Prostate gland (tissue), 2 donors: ENCODE measurements at regions of chr11 and their contacts with region 1.

Region 1: GRCh38 chr11:114610984-114611944 is 15.7 kb upstream of the NXPE4 start:
- DNase-seq: peak; percentile 2
- H3K4me3 ChIP-seq: no peak overlapping the region
- H3K27ac ChIP-seq: no peak overlapping the region
- H3K4me1 ChIP-seq: no peaks in the 10 kb centered on the region
- H3K27me3 ChIP-seq: no peaks in the 10 kb centered on the region
- CTCF ChIP-seq: peak in 3 of 4 experiments; percentile 14 to 47 (median 24)
- POLR2A ChIP-seq: no peak

Region 2: DNA sequence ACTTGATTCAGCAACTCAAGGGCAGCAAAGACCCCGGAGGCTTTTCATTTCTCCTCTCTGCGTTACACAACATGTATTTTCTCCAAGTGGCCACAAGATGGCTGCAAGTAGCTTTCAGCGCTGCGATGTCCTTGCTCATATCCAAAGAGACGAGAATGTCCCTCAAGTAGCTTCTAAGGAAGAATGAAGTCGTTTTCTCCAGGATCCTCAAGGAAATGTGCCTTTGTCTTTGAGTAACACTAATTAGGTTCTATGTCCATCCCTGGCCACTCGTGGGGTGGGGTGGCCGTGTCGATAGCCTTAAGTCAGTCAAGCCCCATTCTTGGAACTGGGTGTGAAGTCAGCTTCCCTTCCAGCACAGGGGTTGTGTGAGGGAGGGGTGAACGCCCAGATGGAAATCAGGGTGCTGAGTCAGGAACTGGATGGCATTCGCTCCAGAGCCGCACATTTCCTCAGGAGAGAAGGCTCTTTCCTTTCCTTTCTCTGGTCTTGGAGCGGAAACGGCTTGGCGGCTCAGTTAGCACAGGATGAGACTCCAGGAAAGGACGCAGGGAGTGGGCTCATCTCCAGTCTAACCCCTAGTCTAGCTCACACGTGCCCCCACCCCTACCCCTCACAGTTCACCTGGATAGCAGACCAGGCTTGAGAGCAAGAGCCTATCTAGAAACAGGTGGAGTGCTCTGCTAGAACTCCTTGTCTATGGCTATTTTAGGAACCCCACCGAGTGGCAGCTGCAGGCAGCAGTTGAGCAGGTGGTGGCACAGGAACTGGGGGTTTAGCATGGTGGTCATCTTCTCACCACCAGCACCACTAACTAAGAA is 270.7 kb before region 1 on chr11:
- intact Hi-C with region 1: loop called (anchors 5 kb)
- DNase-seq: peak; percentile 53
- H3K4me3 ChIP-seq: no peak overlapping the region
- H3K27ac ChIP-seq: no peak overlapping the region
- H3K4me1 ChIP-seq: no peaks in the 10 kb centered on the region
- H3K27me3 ChIP-seq: no peaks in the 10 kb centered on the region
- CTCF ChIP-seq: peak; percentile 55 to 85 (median 68)
- POLR2A ChIP-seq: no peak

Region 3: DNA sequence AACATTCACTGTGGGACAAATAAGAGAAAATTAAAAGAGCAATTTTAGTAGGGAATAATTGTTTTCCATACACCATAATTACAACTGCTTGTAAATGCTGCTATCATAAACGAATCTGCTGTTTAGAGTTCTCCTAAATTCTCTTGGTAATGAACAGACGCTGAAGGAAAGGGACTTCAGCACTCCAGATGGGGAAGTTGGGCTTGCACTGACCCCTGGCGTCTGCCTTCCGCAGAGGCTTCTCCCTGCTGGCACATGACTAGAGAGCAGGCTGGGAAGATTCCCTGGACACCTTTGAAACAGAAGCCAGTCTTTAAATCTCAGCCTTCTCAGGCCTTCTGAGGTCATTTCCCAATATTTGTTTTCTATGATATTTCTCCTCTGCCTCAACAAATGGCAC is 151.1 kb after region 1 on chr11:
- intact Hi-C with region 1: no loop called
- DNase-seq: peak; percentile 51
- H3K4me3 ChIP-seq: no peak overlapping the region
- H3K27ac ChIP-seq: no peak overlapping the region
- H3K4me1 ChIP-seq: no peaks in the 10 kb centered on the region
- H3K27me3 ChIP-seq: no peaks in the 10 kb centered on the region
- CTCF ChIP-seq: peak in 3 of 4 experiments; percentile 54 to 75 (median 67)
- POLR2A ChIP-seq: no peak